Right ventricle myocardium inferior (tissue), 1 donor: ENCODE measurements at regions of chr10 and their contacts with region 1.

Region 1: GRCh38 chr10:100518761-100519241 is 860 bp downstream of the SEC31B start:
- DNase-seq: no peak
- ATAC-seq: peak; percentile 72

Region 2: DNA sequence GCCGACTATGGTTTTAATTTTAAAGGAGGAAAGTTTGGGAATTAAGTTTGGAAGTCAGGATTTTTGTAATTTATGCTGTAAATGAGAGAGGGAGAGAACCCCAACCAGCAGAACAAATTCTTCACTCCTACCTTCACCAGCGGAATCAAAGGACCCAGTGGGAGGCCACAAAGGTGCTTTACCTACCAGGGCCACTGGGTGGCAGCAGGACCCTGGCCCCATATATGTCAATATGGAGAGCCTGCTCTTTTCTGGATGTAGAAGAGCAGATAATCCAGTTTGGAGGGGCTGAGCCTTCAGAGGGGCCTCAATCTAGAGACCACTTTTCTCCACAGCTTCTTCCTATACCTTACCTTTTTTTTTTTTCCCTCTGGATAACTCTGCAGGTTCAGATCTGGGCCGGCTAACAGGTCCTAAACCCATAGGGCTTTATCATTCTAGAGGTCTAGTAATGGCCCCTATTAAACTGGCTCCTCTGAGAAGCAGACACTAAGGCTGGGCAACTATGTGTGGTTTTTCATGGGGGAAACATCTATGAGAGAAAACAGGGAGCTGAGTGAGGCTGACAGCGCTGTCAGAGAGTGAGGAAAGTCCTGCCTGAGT is 180.3 kb before region 1 on chr10:
- intact Hi-C with region 1: loop called (anchors 2 kb)
- DNase-seq: peak; percentile 80
- ATAC-seq: peak; percentile 69

Region 3: GRCh38 chr10:100653957-100654781 is 135.4 kb after region 1 on chr10:
- intact Hi-C with region 1: no loop called
- DNase-seq: no peak
- ATAC-seq: no peak

Region 4: GRCh38 chr10:100829933-100830727 is 311.3 kb after region 1 on chr10:
- intact Hi-C with region 1: no loop called
- DNase-seq: no peak
- ATAC-seq: no peak

Region 5: GRCh38 chr10:100872034-100872791 is 353.4 kb after region 1 on chr10:
- intact Hi-C with region 1: no loop called
- DNase-seq: peak; percentile 23
- ATAC-seq: no peak